Breast epithelium (tissue), 4 donors: ENCODE measurements at regions of chr17 and their contacts with region 1.

Region 1: DNA sequence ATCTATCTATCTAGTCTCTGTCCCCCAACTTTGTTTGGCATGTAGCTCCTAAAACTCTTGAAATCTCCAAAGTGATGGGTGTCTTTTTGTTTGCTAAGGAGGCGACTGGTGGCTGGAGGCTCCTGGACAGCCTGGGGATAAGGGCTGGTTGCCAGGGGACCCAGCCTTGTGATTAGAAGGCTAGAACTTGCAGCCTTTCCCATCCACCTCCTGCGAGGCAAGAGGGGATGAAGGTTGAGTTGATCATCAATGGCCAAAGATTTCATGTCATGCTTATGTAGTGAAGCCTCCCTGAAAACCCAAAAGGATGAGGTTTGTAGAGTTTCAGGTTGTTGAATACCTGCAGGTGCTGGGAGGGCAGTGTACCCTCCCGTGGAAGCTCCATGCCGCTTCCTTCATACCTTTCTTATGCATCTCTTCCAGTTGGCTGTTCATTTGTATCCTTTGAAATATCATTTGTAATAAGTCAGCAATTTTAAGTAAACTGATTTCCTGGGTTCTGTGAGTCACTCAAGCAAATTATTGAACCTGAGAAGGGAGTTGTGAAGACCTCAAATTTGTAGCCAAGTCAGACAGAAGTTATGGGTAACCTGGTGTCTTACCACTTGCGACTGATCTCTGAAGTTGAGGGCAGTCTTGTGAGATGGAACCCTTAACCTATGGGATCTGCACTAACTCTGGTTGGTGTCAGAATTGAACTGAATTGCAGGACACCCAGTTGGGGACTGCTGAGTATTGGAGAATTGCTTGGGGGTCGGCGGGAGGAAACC is 202.4 kb downstream of the SEC14L1 start:
- DNase-seq: peak in 1 of 2 donors; percentile 10
- H3K4me3 ChIP-seq: no peak overlapping the region
- H3K27ac ChIP-seq: no peak overlapping the region
- H3K4me1 ChIP-seq: no peaks in the 10 kb centered on the region
- H3K27me3 ChIP-seq: no peaks in the 10 kb centered on the region
- CTCF ChIP-seq: no peak
- POLR2A ChIP-seq: no peak

Region 2: GRCh38 chr17:77304051-77304745 is 39.0 kb before region 1 on chr17:
- intact Hi-C with region 1: loop called (anchors 2 kb)
- DNase-seq: no peak
- H3K4me3 ChIP-seq: no peak overlapping the region
- H3K27ac ChIP-seq: no peak overlapping the region
- H3K4me1 ChIP-seq: peaks cover 7 to 15% of the 10 kb centered on the region in 2 donors
- H3K27me3 ChIP-seq: no peaks in the 10 kb centered on the region
- CTCF ChIP-seq: no peak
- POLR2A ChIP-seq: no peak

Region 3: GRCh38 chr17:77507111-77507885 is 164.1 kb after region 1 on chr17:
- intact Hi-C with region 1: loop called (anchors 5 kb)
- DNase-seq: no peak
- H3K4me3 ChIP-seq: no peak overlapping the region
- H3K27ac ChIP-seq: no peak overlapping the region
- H3K4me1 ChIP-seq: no peaks in the 10 kb centered on the region
- H3K27me3 ChIP-seq: no peaks in the 10 kb centered on the region
- CTCF ChIP-seq: no peak
- POLR2A ChIP-seq: no peak